PC-9 (cell line): ENCODE measurements at regions of chr3 and their contacts with region 1.

Region 1: DNA sequence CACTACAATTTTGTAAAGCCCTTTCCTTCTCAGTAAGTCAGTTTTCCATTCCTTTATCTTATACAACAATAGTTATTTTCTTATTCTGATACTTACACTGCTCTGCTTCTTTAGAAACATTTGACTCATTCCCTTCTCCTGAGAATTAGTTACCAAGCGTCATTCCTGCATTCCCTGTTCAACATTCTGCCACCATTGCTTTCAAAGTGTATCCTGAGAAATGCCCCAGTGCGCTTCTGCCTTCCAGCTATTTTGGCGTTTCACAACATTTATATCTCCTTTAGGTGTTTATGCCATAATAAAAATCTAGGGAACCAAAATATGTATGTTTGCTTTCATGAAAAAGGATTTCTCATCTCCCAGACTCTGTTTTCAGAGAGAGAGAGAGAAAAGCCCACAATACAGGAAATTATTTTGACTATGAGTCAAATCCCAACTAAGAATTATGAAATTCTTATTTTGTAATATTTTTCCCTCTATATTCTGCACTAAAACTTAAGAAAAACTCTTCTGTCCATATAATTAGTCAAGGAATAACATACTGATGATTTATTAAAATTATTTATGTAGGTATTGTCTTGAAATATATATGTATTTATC is 118.2 kb upstream of the RAP2B start:
- DNase-seq: peak; percentile 40 to 92
- H3K4me3 ChIP-seq: peak overlapping the region; percentile 54
- H3K27ac ChIP-seq: peak overlapping the region; percentile 94
- H3K4me1 ChIP-seq: peaks cover 37% of the 10 kb centered on the region
- H3K27me3 ChIP-seq: no peaks in the 10 kb centered on the region
- CTCF ChIP-seq: no peak

Region 2: GRCh38 chr3:152915695-152916094 is 128.1 kb before region 1 on chr3:
- CTCF ChIA-PET with region 1: no interaction called
- POLR2A ChIA-PET with region 1: no interaction called
- intact Hi-C with region 1: no loop called
- DNase-seq: no peak
- H3K4me3 ChIP-seq: no peak overlapping the region
- H3K27ac ChIP-seq: no peak overlapping the region
- H3K4me1 ChIP-seq: no peaks in the 10 kb centered on the region
- H3K27me3 ChIP-seq: no peaks in the 10 kb centered on the region
- CTCF ChIP-seq: no peak

Region 3: GRCh38 chr3:153080778-153081240 is 37.0 kb after region 1 on chr3:
- CTCF ChIA-PET with region 1: no interaction called
- POLR2A ChIA-PET with region 1: no interaction called
- intact Hi-C with region 1: no loop called
- DNase-seq: no peak
- H3K4me3 ChIP-seq: no peak overlapping the region
- H3K27ac ChIP-seq: no peak overlapping the region
- H3K4me1 ChIP-seq: no peaks in the 10 kb centered on the region; the same call in 1 of the 2 replicates
- H3K27me3 ChIP-seq: no peaks in the 10 kb centered on the region
- CTCF ChIP-seq: no peak

Region 4: DNA sequence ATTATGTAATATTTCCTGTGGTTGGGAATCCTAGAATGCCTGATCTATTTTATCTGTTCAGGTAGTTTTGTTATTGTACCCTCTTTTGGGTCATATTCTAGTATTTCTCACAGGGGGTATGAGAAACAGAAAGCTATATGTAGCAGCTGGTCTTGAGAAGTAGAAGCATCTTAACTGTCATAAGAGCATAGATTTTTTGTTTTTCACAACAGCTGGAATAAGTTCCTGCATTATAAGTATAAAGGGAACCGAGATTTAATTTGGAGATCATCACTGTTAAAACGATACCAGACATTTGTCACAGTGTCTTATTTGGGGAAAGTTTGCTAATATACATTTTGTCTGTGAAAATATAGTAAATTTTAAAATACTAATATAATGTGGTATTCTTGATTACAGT is 123.0 kb after region 1 on chr3:
- CTCF ChIA-PET with region 1: interaction called, 14 read pairs
- POLR2A ChIA-PET with region 1: interaction called, 48 read pairs
- intact Hi-C with region 1: loop called (anchors 1 kb)
- DNase-seq: no peak
- H3K4me3 ChIP-seq: peak overlapping the region; percentile 97; the same call in 1 of the 2 replicates
- H3K27ac ChIP-seq: peak overlapping the region; percentile 25
- H3K4me1 ChIP-seq: peaks cover 42% of the 10 kb centered on the region
- H3K27me3 ChIP-seq: no peaks in the 10 kb centered on the region
- CTCF ChIP-seq: no peak

Region 5: DNA sequence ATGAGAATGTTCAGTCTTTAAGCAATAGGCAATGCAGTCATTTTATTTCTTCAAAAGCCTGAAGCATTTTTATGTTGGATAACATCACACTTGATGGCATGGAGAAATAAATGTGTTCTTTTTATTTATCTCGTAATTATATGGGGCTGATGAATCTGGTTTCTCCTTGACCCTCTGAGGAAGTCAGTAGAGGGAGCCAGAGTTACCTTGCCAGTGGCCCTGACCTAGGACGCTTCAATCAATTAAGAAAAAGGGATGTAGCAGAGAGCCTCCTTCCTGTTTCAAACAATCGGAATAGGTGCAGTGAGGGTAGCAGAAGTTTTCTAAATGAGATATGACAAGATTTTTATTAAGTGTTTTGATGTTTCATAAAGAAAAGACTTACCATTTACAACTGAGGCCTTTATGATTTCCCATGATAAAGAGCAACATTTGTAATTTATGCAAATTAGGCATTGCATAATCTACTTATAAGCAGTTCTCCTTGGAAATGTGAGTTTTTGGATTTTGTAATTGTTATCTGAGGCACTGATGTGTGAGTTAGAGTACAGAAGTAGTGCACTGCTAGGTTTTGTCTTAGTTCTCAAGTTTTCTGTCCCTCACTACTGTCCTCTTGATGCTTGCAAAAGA is 247.3 kb after region 1 on chr3:
- CTCF ChIA-PET with region 1: interaction called, 11 read pairs
- POLR2A ChIA-PET with region 1: no interaction called
- intact Hi-C with region 1: loop called (anchors 1 kb)
- DNase-seq: no peak
- H3K4me3 ChIP-seq: no peak overlapping the region
- H3K27ac ChIP-seq: no peak overlapping the region
- H3K4me1 ChIP-seq: no peaks in the 10 kb centered on the region
- H3K27me3 ChIP-seq: no peaks in the 10 kb centered on the region
- CTCF ChIP-seq: peak; percentile 38; the same call in 1 of the 2 replicates

Region 6: GRCh38 chr3:153528473-153528872 is 484.6 kb after region 1 on chr3:
- CTCF ChIA-PET with region 1: no interaction called
- POLR2A ChIA-PET with region 1: interaction called, 26 read pairs
- intact Hi-C with region 1: no loop called
- DNase-seq: no peak
- H3K4me3 ChIP-seq: no peak overlapping the region
- H3K27ac ChIP-seq: no peak overlapping the region
- H3K4me1 ChIP-seq: no peaks in the 10 kb centered on the region
- H3K27me3 ChIP-seq: no peaks in the 10 kb centered on the region
- CTCF ChIP-seq: no peak

Region 7: GRCh38 chr3:153768561-153769469 is 725.0 kb after region 1 on chr3:
- CTCF ChIA-PET with region 1: no interaction called
- POLR2A ChIA-PET with region 1: interaction called, 11 read pairs
- intact Hi-C with region 1: loop called (anchors 5 kb)
- DNase-seq: peak; percentile 38 to 50
- H3K4me3 ChIP-seq: no peak overlapping the region
- H3K27ac ChIP-seq: no peak overlapping the region
- H3K4me1 ChIP-seq: 0 out of 2 replicates have a peak, but pooled peaks cover 9% of the 10 kb centered on the region
- H3K27me3 ChIP-seq: no peaks in the 10 kb centered on the region
- CTCF ChIP-seq: peak; percentile 93